ENCODE measurements at regions of chr4 and their contacts with region 1.

Region 1: DNA sequence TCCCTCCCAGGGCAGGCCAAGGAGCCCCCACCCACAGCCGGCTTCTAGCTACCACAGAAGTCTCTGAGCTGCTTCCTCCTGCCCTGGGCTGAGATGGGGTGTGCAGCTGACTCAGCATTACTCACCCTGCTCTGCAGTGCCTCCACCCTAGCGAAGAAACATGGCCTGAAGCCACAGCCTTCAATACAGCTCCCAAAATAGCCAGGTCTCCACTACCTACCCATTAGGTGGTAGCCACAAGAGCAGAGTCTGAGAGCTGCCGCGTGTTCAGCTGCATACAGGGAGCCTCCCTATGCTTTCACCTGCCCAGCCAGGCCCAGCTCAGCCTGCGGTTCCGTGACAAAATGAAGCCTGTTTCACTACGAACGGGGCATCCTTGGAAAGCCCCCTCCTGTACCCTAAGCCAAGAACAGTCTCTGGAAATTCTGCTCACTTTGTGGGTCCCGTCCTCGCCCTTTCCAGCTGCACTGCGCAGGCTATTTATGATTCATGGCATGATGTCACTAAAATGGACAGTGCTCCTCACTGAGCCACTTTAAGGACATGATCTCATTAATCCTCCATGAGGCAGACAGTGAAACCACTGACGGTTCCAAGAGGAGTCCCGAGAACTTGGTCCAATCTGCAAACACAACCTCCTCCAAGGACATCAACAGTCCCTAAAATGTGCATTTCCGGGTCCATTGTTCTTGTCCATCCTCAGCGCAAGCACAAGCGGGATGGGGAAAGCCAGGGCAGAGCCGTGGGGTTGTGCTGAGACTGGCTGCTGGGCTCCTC is 20.2 kb downstream of the WDR1 start:
- DNase-seq: peak; percentile 80
- H3K4me3 ChIP-seq: no peak overlapping the region
- H3K27ac ChIP-seq: peak overlapping the region; percentile 95
- H3K27me3 ChIP-seq: no peaks in the 10 kb centered on the region
- CTCF ChIP-seq: no peak

Region 2: DNA sequence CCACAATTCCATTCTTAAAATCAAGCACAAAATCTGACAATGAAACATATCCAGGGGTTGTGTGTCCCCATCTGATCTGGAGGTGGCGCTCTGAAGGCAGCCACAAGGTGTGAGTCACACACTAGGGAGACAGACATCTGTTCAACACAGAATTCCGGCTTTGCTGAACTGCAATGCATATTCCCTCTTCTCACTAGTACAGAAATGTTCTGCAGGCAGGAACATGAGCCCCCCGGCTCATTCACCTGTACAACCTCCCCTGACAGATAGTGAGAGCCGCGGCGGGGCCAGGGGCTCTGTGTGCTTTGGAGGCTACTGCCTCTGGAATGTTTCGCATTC is 21.7 kb before region 1 on chr4:
- CTCF ChIA-PET with region 1: no interaction called
- POLR2A ChIA-PET with region 1: no interaction called
- DNase-seq: no peak
- H3K4me3 ChIP-seq: no peak overlapping the region
- H3K27ac ChIP-seq: peak overlapping the region; percentile 52
- H3K27me3 ChIP-seq: no peaks in the 10 kb centered on the region
- CTCF ChIP-seq: peak; percentile 59

Region 3: DNA sequence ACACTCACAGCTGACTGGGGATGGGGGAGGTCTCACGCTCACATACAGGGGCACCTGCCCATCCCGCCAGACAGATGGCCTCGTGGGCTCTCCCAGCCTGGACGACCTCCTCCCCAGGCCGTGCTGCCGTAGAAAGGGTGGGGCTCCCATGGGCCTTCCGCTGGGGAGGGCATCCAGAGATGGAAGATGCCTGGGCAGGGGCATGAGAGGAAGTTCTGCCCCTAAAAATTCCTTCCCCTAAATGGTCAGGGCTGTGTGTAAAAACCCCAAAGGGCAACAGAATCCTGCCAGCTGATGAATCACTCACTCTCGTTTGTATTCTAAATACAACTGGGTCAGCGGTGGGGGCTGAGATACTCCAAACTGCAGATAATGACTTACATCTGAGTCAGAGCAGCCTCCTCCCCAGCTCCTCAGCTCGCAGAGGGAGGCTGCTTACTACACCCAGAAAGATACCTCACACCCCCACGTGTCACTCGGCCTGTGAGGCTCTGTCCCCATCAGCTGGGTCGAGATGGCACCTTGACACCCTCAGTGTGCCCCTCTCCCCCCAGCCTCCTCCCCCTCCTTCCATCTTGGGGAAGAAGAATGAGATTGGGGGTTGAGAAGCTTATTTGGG is 10.1 kb after region 1 on chr4:
- CTCF ChIA-PET with region 1: no interaction called
- POLR2A ChIA-PET with region 1: interaction called, 63 read pairs
- DNase-seq: peak; percentile 92
- H3K4me3 ChIP-seq: peak overlapping the region; percentile 48
- H3K27ac ChIP-seq: peak overlapping the region; percentile 96
- H3K27me3 ChIP-seq: no peaks in the 10 kb centered on the region
- CTCF ChIP-seq: no peak

Region 4: GRCh38 chr4:10116580-10117358 is 20.4 kb after region 1 on chr4 and contains the start of gene WDR1:
- CTCF ChIA-PET with region 1: no interaction called
- POLR2A ChIA-PET with region 1: interaction called, 75 read pairs
- DNase-seq: peak; percentile 90
- H3K4me3 ChIP-seq: peak within 1 kb of the TSS; percentile 87
- H3K27ac ChIP-seq: peak within 1 kb of the TSS; percentile 91
- H3K27me3 ChIP-seq: peaks cover 2% of the 10 kb centered on the region
- CTCF ChIP-seq: no peak
- polyA plus RNA-seq, gene WDR1: 722 and 735 TPM in 2 replicates

Region 5: DNA sequence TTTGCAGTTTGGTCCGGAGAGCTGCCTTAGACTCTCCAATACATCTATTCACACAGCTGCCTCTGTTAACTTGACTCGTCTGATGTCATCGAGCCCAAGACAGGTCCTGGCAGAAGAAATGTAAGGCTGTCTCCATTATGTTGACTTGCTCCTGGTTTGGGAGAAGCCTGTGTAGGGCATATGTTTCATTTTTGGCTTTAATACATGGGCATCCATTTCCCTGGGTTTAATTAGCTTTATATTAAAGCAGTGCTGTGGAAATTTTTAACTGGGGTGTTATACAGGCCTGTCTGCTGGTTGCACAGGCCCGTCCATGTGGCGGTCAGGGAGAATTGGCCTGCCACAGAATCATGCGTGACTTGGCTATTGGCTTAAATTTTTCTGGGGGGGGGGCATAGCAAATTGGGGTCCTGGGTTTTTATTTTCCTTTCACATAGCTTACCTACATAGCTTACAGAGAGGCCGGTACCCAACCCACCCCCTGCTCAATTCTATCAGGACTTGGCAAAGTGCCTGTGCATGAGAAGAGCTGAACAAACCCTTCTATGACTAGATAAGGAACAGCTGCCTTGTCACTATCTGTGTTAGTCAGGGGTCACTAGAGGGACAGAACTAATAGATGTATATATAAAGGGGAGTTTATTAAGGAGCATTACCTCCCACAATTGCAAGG is 143.7 kb after region 1 on chr4:
- CTCF ChIA-PET with region 1: no interaction called
- POLR2A ChIA-PET with region 1: no interaction called
- DNase-seq: no peak
- H3K4me3 ChIP-seq: no peak overlapping the region
- H3K27ac ChIP-seq: no peak overlapping the region
- H3K27me3 ChIP-seq: no peaks in the 10 kb centered on the region
- CTCF ChIP-seq: no peak

Region 6: GRCh38 chr4:11119474-11119873 is 1023.1 kb after region 1 on chr4:
- CTCF ChIA-PET with region 1: no interaction called
- POLR2A ChIA-PET with region 1: no interaction called
- DNase-seq: no peak
- H3K4me3 ChIP-seq: no peak overlapping the region
- H3K27ac ChIP-seq: no peak overlapping the region
- H3K27me3 ChIP-seq: no peaks in the 10 kb centered on the region
- CTCF ChIP-seq: no peak